Natural killer cell (primary cell): ENCODE measurements at regions of chr17 and their contacts with region 1.

Region 1: DNA sequence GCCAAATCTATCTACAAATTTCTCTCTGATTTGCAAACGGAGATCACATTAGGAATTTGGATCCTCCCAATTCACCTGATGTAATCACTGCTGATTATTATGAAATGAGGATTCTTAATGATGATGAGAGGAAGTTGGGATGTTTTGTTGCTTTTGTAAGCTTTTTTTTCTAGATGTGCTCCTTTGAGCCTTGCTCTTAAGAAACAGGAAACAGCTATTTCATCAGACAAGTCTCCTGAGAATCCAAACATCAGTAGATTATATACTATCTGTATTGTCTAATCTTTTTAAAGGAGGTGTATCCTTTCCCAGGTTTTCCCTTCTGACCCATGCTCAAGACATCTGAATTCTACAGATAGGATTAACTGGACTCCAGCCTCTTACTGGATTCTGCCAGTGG is 73.3 kb downstream of the KIF2B start:
- DNase-seq: no peak
- ATAC-seq: no peak
- H3K4me3 ChIP-seq: no peak overlapping the region
- H3K4me3 Mint-ChIP-seq: no peak overlapping the region
- H3K27ac ChIP-seq: no peak overlapping the region
- H3K27ac Mint-ChIP-seq: no peak overlapping the region
- H3K4me1 ChIP-seq: no peaks in the 10 kb centered on the region
- H3K4me1 Mint-ChIP-seq: no peaks in the 10 kb centered on the region
- H3K27me3 ChIP-seq: no peaks in the 10 kb centered on the region
- H3K27me3 Mint-ChIP-seq: no peaks in the 10 kb centered on the region
- CTCF ChIP-seq: no peak

Region 2: DNA sequence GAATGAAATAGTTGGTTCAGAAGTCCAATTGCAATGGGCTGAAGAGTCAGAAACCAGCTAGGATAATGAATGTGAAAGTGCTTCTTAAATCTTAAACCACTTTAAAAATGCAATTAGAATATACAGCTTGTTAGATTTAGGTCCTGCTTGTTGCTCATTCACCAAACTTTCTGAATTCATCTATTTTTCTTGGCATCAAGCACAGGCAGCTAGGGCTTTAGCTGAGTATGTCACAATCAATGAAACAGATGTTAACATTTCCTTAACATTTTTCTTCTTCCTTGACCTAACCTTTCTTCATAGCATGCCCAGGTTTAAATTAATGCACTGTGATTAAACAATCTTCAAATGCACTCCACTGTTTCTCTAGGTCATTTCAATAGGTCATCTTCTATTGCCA is 58.9 kb before region 1 on chr17:
- intact Hi-C with region 1: loop called (anchors 10 kb)
- DNase-seq: no peak
- ATAC-seq: no peak
- H3K4me3 ChIP-seq: no peak overlapping the region
- H3K4me3 Mint-ChIP-seq: no peak overlapping the region
- H3K27ac ChIP-seq: no peak overlapping the region
- H3K27ac Mint-ChIP-seq: no peak overlapping the region
- H3K4me1 ChIP-seq: no peaks in the 10 kb centered on the region
- H3K4me1 Mint-ChIP-seq: no peaks in the 10 kb centered on the region
- H3K27me3 ChIP-seq: no peaks in the 10 kb centered on the region
- H3K27me3 Mint-ChIP-seq: no peaks in the 10 kb centered on the region
- CTCF ChIP-seq: no peak